H1 (cell line): ENCODE measurements at regions of chr16 and their contacts with region 1.

Region 1: DNA sequence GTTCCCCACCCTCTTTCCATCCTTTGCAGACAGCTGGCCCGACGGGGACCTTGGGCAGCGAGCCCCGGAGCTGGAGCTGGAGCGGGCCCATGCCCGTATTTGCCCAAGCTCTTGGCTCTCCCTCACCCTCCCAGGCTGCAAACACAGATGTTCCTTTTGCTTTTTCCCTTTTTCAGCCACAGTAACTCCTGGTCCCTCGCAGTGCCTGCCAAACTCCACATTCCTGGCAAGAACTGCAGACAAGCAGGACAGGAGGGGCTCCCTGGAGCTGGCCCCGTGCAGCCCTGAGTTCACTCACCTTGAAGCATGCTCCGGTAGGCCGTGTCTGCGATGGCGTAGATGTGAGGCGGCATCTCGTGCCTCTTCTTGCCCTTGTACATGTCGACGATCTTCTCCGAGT is 33.9 kb downstream of the MYH11 start:
- DNase-seq: no peak
- H3K4me3 ChIP-seq: no peak overlapping the region
- H3K27ac ChIP-seq: no peak overlapping the region
- H3K4me1 ChIP-seq: no peaks in the 10 kb centered on the region
- H3K27me3 ChIP-seq: no peaks in the 10 kb centered on the region
- CTCF ChIP-seq: no peak
- EP300 ChIP-seq: no peak
- POLR2A ChIP-seq: no peak
- RAD21 ChIP-seq: no peak

Region 2: GRCh38 chr16:15732416-15732815 is 90.5 kb before region 1 on chr16:
- CTCF ChIA-PET with region 1: no interaction called
- POLR2A ChIA-PET with region 1: no interaction called
- DNase-seq: no peak
- H3K4me3 ChIP-seq: no peak overlapping the region
- H3K27ac ChIP-seq: no peak overlapping the region
- H3K4me1 ChIP-seq: no peaks in the 10 kb centered on the region; a peak in 1 of 7 replicates
- H3K27me3 ChIP-seq: no peaks in the 10 kb centered on the region
- CTCF ChIP-seq: no peak
- EP300 ChIP-seq: no peak
- POLR2A ChIP-seq: no peak
- RAD21 ChIP-seq: no peak

Region 3: GRCh38 chr16:15757630-15758251 is 65.2 kb before region 1 on chr16:
- CTCF ChIA-PET with region 1: interaction called, 18 read pairs
- POLR2A ChIA-PET with region 1: no interaction called
- DNase-seq: peak in 1 of 2 experiments; percentile 55
- H3K4me3 ChIP-seq: no peak overlapping the region
- H3K27ac ChIP-seq: no peak overlapping the region
- H3K4me1 ChIP-seq: peaks cover 0 to 2% (median under 1%) of the 10 kb centered on the region in 4 experiments; a peak in 1 of 7 replicates
- H3K27me3 ChIP-seq: no peaks in the 10 kb centered on the region
- CTCF ChIP-seq: no peak
- EP300 ChIP-seq: no peak
- POLR2A ChIP-seq: no peak
- RAD21 ChIP-seq: no peak

Region 4: DNA sequence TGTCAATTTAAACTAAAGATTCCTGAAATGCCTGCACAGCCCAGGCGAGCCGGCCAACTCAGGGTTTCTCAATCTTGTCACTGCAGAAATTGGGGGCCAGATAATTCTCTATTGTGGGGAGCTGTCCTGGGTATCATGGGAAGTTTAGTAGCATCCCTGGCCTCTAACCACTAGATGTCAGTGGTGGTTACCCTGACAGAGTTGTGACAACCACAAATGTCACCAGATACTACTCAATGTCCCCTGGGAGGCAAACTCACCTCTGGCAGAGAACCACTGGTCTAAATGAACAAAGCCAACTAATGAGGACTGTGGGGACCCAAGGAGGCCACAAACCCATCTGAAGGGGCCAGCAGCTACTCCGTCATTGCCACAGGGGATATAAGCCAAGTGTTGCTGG is 57.1 kb before region 1 on chr16:
- CTCF ChIA-PET with region 1: interaction called, 10 read pairs
- POLR2A ChIA-PET with region 1: no interaction called
- DNase-seq: peak in 1 of 2 experiments; percentile 50
- H3K4me3 ChIP-seq: no peak overlapping the region
- H3K27ac ChIP-seq: no peak overlapping the region
- H3K4me1 ChIP-seq: 0 out of 7 replicates have a peak, but pooled peaks cover 0 to 1% (median 0%) of the 10 kb centered on the region in 4 experiments
- H3K27me3 ChIP-seq: no peaks in the 10 kb centered on the region
- CTCF ChIP-seq: peak; percentile 37 to 76 (median 72)
- EP300 ChIP-seq: no peak
- POLR2A ChIP-seq: no peak
- RAD21 ChIP-seq: peak; percentile 77 to 85

Region 5: DNA sequence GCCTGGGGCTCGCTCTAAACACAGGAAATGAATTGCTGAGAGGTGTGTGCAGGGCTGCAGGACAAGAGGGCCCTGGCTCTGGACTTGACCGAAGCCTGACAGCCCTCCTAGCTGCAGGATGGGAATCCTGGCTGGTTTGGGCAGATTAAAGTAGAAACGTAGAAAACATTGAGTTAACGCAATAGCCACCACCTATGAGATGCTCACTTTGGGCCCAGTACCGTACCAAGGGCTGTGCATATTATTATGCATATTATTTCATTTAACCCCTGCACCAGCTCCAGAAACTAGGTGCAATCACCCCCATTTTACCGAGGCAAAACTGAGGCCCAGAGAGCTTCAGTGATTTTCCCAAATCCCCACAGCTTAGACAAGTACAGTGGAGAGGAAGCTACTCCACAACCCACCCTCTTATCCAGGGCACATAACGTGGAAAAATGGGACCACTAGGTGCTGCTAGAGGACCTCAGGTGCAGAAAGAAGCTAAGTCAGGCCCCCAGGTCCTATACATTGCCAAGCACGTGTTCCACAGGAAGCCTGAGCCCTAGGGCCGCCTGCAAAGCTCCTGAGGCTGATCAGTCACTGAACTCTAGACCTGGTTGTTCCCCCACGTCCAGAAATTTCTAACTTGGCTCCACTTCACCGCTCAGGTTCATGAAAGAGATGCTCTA is 45.3 kb before region 1 on chr16:
- CTCF ChIA-PET with region 1: interaction called, 44 read pairs
- POLR2A ChIA-PET with region 1: no interaction called
- DNase-seq: peak; percentile 41 to 51
- H3K4me3 ChIP-seq: no peak overlapping the region
- H3K27ac ChIP-seq: no peak overlapping the region
- H3K4me1 ChIP-seq: no peaks in the 10 kb centered on the region
- H3K27me3 ChIP-seq: peaks cover 0 to 6% (median 0%) of the 10 kb centered on the region in 4 experiments; a peak in 2 of 7 replicates
- CTCF ChIP-seq: peak; percentile 60 to 95 (median 89)
- EP300 ChIP-seq: no peak
- POLR2A ChIP-seq: no peak
- RAD21 ChIP-seq: peak; percentile 95 to 96

Region 6: GRCh38 chr16:15790458-15790857 is 32.5 kb before region 1 on chr16:
- CTCF ChIA-PET with region 1: interaction called, 11 read pairs
- POLR2A ChIA-PET with region 1: no interaction called
- DNase-seq: no peak
- H3K4me3 ChIP-seq: no peak overlapping the region
- H3K27ac ChIP-seq: no peak overlapping the region
- H3K4me1 ChIP-seq: no peaks in the 10 kb centered on the region
- H3K27me3 ChIP-seq: no peaks in the 10 kb centered on the region
- CTCF ChIP-seq: no peak
- EP300 ChIP-seq: no peak
- POLR2A ChIP-seq: no peak
- RAD21 ChIP-seq: no peak

Region 7: DNA sequence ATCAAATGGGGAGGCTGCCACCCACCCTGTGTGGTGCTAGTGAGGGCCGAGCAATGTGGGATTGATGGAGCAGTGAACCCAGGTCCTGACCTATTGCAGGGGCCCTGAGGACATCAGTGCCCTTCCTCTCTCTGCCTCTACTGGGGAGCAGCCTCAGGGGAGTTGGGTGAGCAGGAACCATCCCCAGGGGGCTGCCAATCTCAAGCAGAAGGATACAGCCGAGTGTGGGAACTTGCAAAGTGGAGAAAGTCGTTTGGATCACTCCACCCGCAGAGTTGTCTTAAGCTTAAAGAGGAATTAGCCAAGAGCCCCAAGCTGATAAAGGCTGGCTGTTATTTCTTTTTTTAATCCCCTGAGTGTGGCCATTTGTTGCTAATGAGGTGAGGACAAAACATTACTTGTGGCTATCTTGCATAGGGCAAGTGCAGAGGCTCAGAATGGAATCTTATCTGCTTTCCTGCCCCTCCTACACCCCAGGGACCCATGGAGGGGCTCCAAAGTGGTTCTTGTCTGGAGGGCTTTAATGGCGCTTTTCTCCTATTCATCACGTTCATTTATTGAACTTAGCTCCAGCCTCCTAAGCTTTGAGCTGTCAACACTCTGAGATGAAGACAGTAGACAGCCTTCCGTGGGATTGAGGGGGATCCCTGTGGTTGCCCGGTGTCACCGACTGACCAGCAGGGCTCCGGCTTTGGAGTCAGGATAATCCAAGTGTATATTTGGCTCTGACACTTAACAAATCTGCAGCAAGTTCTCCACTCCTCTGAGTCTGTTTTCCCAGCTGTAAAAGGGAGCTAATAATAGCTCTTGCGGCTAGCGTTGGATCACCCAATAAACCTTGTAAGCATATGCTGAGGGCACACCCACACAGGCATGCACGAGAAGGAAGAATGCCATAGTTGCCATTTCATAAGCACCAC is 11.2 kb before region 1 on chr16:
- CTCF ChIA-PET with region 1: interaction called, 18 read pairs
- POLR2A ChIA-PET with region 1: no interaction called
- DNase-seq: no peak
- H3K4me3 ChIP-seq: no peak overlapping the region
- H3K27ac ChIP-seq: no peak overlapping the region
- H3K4me1 ChIP-seq: peaks cover 0 to 13% (median 6%) of the 10 kb centered on the region in 4 experiments; a peak in 6 of 7 replicates
- H3K27me3 ChIP-seq: 0 out of 7 replicates have a peak, but pooled peaks cover 0 to 2% (median 0%) of the 10 kb centered on the region in 4 experiments
- CTCF ChIP-seq: no peak
- EP300 ChIP-seq: no peak
- POLR2A ChIP-seq: no peak
- RAD21 ChIP-seq: no peak

Region 8: DNA sequence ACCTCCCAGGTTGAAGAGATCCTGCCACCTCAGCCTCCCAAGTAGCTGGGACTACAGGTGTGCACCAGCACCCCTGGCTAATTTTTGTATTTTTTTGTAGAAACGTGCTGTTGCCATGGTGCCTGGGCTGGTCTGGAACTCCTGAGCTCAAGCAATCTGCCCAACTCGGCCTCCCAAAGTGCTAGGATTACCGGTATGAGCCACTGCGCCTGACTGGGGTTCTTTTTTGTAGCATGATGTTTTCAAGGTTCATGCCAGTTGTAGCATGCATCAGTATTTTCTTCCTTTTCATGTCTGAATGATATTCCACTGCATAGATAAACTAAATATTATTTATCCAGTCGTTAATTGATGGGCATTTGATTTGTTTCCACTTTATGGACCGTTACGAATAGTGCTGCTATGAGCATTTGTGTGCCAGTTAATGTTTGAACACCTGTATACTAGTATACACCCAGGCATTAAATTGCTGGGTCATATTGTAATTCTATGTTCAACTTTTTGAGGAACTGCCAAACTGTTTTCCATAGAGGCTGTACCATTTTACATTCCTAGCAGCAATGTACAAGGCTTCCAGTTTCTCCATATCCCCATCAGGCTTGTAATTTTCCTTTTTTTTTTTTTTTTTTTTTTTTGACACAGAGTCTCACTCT is 90.2 kb after region 1 on chr16:
- CTCF ChIA-PET with region 1: no interaction called
- POLR2A ChIA-PET with region 1: no interaction called
- DNase-seq: no peak
- H3K4me3 ChIP-seq: no peak overlapping the region
- H3K27ac ChIP-seq: no peak overlapping the region
- H3K4me1 ChIP-seq: no peaks in the 10 kb centered on the region; a peak in 2 of 7 replicates
- H3K27me3 ChIP-seq: no peaks in the 10 kb centered on the region
- CTCF ChIP-seq: no peak
- EP300 ChIP-seq: no peak
- POLR2A ChIP-seq: no peak
- RAD21 ChIP-seq: no peak

Region 9: GRCh38 chr16:15928261-15929104 is 105.5 kb after region 1 on chr16:
- CTCF ChIA-PET with region 1: no interaction called
- POLR2A ChIA-PET with region 1: no interaction called
- DNase-seq: no peak
- H3K4me3 ChIP-seq: no peak overlapping the region
- H3K27ac ChIP-seq: no peak overlapping the region
- H3K4me1 ChIP-seq: no peaks in the 10 kb centered on the region; a peak in 1 of 7 replicates
- H3K27me3 ChIP-seq: no peaks in the 10 kb centered on the region
- CTCF ChIP-seq: no peak
- EP300 ChIP-seq: no peak
- POLR2A ChIP-seq: no peak
- RAD21 ChIP-seq: no peak

Region 10: GRCh38 chr16:16127469-16128116 is 304.6 kb after region 1 on chr16:
- CTCF ChIA-PET with region 1: no interaction called
- POLR2A ChIA-PET with region 1: no interaction called
- DNase-seq: peak; percentile 39 to 88
- H3K4me3 ChIP-seq: no peak overlapping the region
- H3K27ac ChIP-seq: no peak overlapping the region
- H3K4me1 ChIP-seq: no peaks in the 10 kb centered on the region
- H3K27me3 ChIP-seq: no peaks in the 10 kb centered on the region
- CTCF ChIP-seq: peak; percentile 66 to 72 (median 69)
- EP300 ChIP-seq: no peak
- POLR2A ChIP-seq: no peak
- RAD21 ChIP-seq: peak; percentile 87 to 89